ENCODE measurements at regions of chr19 and their contacts with region 1.

Region 1: GRCh38 chr19:33771384-33772101 is 25.1 kb upstream of the KCTD15 start:
- DNase-seq: peak in 7 of 9 donors; percentile 35 to 68 (median 40)
- ATAC-seq: peak; percentile 60
- H3K4me3 ChIP-seq: no peak overlapping the region
- H3K4me3 Mint-ChIP-seq: no peak overlapping the region
- H3K27ac ChIP-seq: no peak overlapping the region
- H3K27ac Mint-ChIP-seq: no peak overlapping the region
- H3K4me1 ChIP-seq: no peaks in the 10 kb centered on the region
- H3K4me1 Mint-ChIP-seq: no peaks in the 10 kb centered on the region
- H3K27me3 ChIP-seq: no peaks in the 10 kb centered on the region
- H3K27me3 Mint-ChIP-seq: peaks cover 0 to 24% (median 22%) of the 10 kb centered on the region in 5 donors

Region 2: GRCh38 chr19:33241530-33242101 is 529.9 kb before region 1 on chr19:
- CTCF ChIA-PET with region 1: no interaction called
- POLR2A ChIA-PET with region 1: no interaction called
- intact Hi-C with region 1: loop called in 1 of 2 experiments (anchors 5 kb)
- DNase-seq: no peak
- ATAC-seq: peak; percentile 68
- H3K4me3 ChIP-seq: no peak overlapping the region
- H3K4me3 Mint-ChIP-seq: no peak overlapping the region
- H3K27ac ChIP-seq: no peak overlapping the region
- H3K27ac Mint-ChIP-seq: no peak overlapping the region
- H3K4me1 ChIP-seq: peaks cover 0 to 20% of the 10 kb centered on the region in 2 donors
- H3K4me1 Mint-ChIP-seq: peaks cover 0 to 2% (median 0%) of the 10 kb centered on the region in 7 donors
- H3K27me3 ChIP-seq: no peaks in the 10 kb centered on the region
- H3K27me3 Mint-ChIP-seq: peaks cover 0 to 10% (median 0%) of the 10 kb centered on the region in 5 donors

Region 3: DNA sequence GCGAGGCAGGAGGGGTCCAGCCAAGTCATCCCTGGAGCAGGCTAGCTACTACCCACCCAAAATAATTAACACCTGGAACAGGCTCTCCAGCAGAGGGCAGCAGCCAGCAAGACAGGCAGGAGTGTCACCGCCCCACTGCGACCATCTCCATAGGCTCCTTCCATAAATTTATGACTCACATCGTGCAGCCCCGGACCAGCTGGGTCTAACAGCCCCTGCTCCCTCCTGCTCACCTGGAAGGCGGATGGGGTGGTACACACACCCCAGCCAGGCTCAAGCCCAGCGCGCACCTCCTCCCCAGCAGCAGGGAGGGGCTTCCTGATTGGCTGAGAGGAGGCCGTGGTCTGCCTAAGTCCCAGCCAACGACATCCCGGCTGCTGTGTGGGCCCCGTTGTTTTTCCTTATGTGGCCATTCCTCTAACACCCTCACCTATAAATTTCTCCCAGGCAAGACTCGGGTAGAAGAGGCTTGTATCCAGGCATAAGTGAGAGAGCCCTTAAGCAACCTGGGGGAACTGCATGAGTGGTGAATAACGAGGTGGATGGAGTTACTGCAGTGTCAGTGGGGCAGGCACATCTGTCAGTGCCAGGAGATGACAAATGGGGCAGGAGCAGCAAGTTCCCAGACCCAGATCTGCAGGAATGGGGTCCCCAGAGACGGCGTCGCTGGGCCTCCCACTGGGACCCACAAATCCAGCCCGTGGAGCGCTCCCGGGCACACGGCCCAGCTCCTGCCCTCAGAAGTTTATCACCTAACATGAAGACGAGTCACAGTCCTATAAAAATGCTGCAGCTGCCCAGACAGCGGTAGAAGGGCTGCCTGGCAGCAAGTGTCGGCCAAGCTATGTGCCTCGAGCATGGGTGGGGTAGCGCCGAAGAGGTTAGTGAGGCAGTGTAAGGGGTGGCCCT is 355.0 kb before region 1 on chr19:
- CTCF ChIA-PET with region 1: no interaction called
- POLR2A ChIA-PET with region 1: no interaction called
- intact Hi-C with region 1: loop called in 1 of 2 experiments (anchors 5 kb)
- DNase-seq: peak; percentile 31 to 64 (median 53)
- ATAC-seq: peak; percentile 81
- H3K4me3 ChIP-seq: peak overlapping the region; percentile 21
- H3K4me3 Mint-ChIP-seq: peak overlapping the region; percentile 61 to 80 (median 72)
- H3K27ac ChIP-seq: no peak overlapping the region
- H3K27ac Mint-ChIP-seq: peak overlapping the region in 3 of 9 donors; percentile 8 to 38 (median 36)
- H3K4me1 ChIP-seq: no peaks in the 10 kb centered on the region
- H3K4me1 Mint-ChIP-seq: peaks cover 2 to 9% (median 8%) of the 10 kb centered on the region in 7 donors
- H3K27me3 ChIP-seq: no peaks in the 10 kb centered on the region
- H3K27me3 Mint-ChIP-seq: no peaks in the 10 kb centered on the region

Region 4: GRCh38 chr19:33430674-33431277 is 340.8 kb before region 1 on chr19:
- CTCF ChIA-PET with region 1: interaction called, 3 read pairs
- POLR2A ChIA-PET with region 1: no interaction called
- intact Hi-C with region 1: loop called in 1 of 2 experiments (anchors 1 kb)
- DNase-seq: peak in 7 of 9 donors; percentile 41 to 69 (median 53)
- ATAC-seq: peak; percentile 83
- H3K4me3 ChIP-seq: no peak overlapping the region
- H3K4me3 Mint-ChIP-seq: peak overlapping the region; percentile 1 to 76 (median 50)
- H3K27ac ChIP-seq: peak overlapping the region; percentile 37
- H3K27ac Mint-ChIP-seq: peak overlapping the region in 7 of 9 donors; percentile 65 to 90 (median 80)
- H3K4me1 ChIP-seq: peaks cover 9 to 13% of the 10 kb centered on the region in 2 donors
- H3K4me1 Mint-ChIP-seq: peaks cover 3 to 16% (median 11%) of the 10 kb centered on the region in 7 donors
- H3K27me3 ChIP-seq: no peaks in the 10 kb centered on the region
- H3K27me3 Mint-ChIP-seq: peaks cover 0 to 4% (median 0%) of the 10 kb centered on the region in 5 donors

Region 5: GRCh38 chr19:33705090-33705847 is 66.3 kb before region 1 on chr19:
- CTCF ChIA-PET with region 1: no interaction called
- POLR2A ChIA-PET with region 1: no interaction called
- intact Hi-C with region 1: no loop called
- DNase-seq: no peak
- ATAC-seq: no peak
- H3K4me3 ChIP-seq: no peak overlapping the region
- H3K4me3 Mint-ChIP-seq: no peak overlapping the region
- H3K27ac ChIP-seq: no peak overlapping the region
- H3K27ac Mint-ChIP-seq: no peak overlapping the region
- H3K4me1 ChIP-seq: no peaks in the 10 kb centered on the region
- H3K4me1 Mint-ChIP-seq: no peaks in the 10 kb centered on the region
- H3K27me3 ChIP-seq: no peaks in the 10 kb centered on the region
- H3K27me3 Mint-ChIP-seq: peaks cover 0 to 14% (median 8%) of the 10 kb centered on the region in 5 donors

Region 6: DNA sequence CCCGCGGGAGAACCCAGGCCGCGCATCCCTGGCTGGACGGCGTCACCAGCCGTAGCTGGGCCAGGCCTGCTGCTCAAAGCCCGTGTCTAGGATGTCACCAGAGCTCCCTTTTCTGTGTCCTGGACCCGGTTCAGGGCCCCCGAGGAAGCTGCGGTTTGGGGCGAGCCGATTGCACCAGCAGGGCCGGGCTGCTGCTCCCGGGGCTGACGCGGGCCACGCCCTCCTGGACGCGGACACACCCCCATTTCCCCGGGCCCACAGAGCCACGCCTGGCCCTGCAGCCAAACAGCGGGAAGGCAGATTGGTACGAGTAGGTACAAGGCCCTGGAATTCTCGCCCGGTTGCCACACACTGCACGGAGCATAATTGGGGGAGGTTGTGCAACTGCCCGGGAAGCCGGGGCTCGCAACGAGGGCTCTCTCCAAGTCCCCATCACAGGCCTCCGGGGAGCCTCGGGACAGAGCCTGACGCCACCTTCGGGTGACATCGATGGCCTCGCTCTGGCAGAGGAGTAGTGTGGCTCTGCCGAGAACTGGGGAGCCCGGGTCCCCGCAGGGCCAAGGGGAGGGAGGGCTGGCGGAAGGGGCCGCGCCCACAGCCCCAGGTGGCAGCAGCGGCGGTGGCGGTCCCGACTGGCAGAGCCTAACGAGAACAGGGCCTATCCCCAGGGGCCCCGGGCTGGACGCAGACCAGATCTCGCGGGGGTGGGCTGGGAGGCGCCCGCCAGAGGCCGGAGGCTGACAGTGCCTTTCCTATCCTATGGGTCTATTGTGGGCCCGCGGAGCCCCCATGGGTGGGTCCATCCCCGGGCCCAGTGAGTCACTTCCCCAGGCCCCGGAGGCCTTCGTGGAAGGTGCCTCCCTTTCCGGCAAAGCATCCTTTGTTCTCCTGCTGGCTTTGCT is 48.6 kb after region 1 on chr19:
- CTCF ChIA-PET with region 1: no interaction called
- POLR2A ChIA-PET with region 1: no interaction called
- intact Hi-C with region 1: no loop called
- DNase-seq: peak in 8 of 9 donors; percentile 15 to 77 (median 28)
- ATAC-seq: peak; percentile 85
- H3K4me3 ChIP-seq: peak overlapping the region; percentile 54
- H3K4me3 Mint-ChIP-seq: peak overlapping the region; percentile 58 to 91 (median 74)
- H3K27ac ChIP-seq: no peak overlapping the region
- H3K27ac Mint-ChIP-seq: peak overlapping the region in 1 of 9 donors; percentile 86
- H3K4me1 ChIP-seq: no peaks in the 10 kb centered on the region
- H3K4me1 Mint-ChIP-seq: peaks cover 0 to 35% (median 11%) of the 10 kb centered on the region in 7 donors
- H3K27me3 ChIP-seq: peaks cover 0 to 3% of the 10 kb centered on the region in 2 donors
- H3K27me3 Mint-ChIP-seq: peaks cover 0 to 20% (median 6%) of the 10 kb centered on the region in 5 donors

Region 7: GRCh38 chr19:34134190-34135053 is 362.9 kb after region 1 on chr19:
- CTCF ChIA-PET with region 1: no interaction called
- POLR2A ChIA-PET with region 1: no interaction called
- intact Hi-C with region 1: no loop called
- DNase-seq: peak; percentile 79 to 92 (median 87)
- ATAC-seq: peak; percentile 99
- H3K4me3 ChIP-seq: peak overlapping the region; percentile 91
- H3K4me3 Mint-ChIP-seq: peak overlapping the region; percentile 94 to 97 (median 95)
- H3K27ac ChIP-seq: peak overlapping the region; percentile 91
- H3K27ac Mint-ChIP-seq: peak overlapping the region; percentile 90 to 96 (median 91)
- H3K4me1 ChIP-seq: peaks cover 0 to 7% of the 10 kb centered on the region in 2 donors
- H3K4me1 Mint-ChIP-seq: peaks cover 3 to 11% (median 8%) of the 10 kb centered on the region in 7 donors
- H3K27me3 ChIP-seq: no peaks in the 10 kb centered on the region
- H3K27me3 Mint-ChIP-seq: peaks cover 0 to 3% (median 0%) of the 10 kb centered on the region in 5 donors

Measured in naive thymus-derived CD4-positive, alpha-beta T cell (primary cell).